Activated naive CD4-positive, alpha-beta T cell treated with anti-CD3 and anti-CD28 coated beads for 36 hours (primary cell): ENCODE measurements at regions of chr4 and their contacts with region 1.

Region 1: GRCh38 chr4:38179690-38180377 is 219.6 kb downstream of the PTTG2 start:
- DNase-seq: peak; percentile 86
- H3K4me3 Mint-ChIP-seq: no peak overlapping the region
- H3K27ac Mint-ChIP-seq: no peak overlapping the region
- H3K4me1 Mint-ChIP-seq: peaks cover 33% of the 10 kb centered on the region
- H3K27me3 Mint-ChIP-seq: no peaks in the 10 kb centered on the region

Region 2: GRCh38 chr4:37623125-37623524 is 556.7 kb before region 1 on chr4:
- CTCF ChIA-PET with region 1: no interaction called
- intact Hi-C with region 1: no loop called
- DNase-seq: no peak
- H3K4me3 Mint-ChIP-seq: no peak overlapping the region
- H3K27ac Mint-ChIP-seq: no peak overlapping the region
- H3K4me1 Mint-ChIP-seq: no peaks in the 10 kb centered on the region
- H3K27me3 Mint-ChIP-seq: no peaks in the 10 kb centered on the region

Region 3: DNA sequence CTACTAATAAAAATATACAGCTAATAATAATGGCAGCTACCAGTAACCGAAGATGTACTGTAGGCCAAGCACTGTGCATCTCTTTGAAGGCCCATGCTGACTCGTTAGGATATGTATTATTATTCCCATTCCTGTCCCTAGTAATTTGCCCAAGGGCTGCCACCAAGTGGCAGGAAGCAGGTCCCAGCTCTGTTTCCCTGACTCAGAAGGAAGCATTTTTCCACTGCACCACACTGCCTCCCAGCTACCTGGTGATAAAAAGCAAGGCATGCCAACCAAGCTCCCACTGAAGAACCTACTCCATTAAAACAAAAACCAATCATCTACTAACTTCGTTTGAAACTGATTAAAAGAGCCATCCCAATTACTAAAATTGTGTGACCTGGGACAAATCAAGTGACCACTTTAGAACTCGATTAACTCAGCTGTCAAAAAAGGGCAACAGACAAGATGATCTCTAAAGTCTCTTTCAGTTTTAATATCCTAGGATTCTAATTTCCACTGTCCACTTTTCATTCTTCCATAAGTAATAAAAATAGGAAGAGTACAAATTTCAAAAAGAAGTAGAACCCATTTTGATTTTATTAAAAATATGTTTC is 377.7 kb before region 1 on chr4:
- CTCF ChIA-PET with region 1: interaction called, 3 read pairs
- intact Hi-C with region 1: loop called (anchors 2 kb)
- DNase-seq: peak; percentile 46
- H3K4me3 Mint-ChIP-seq: no peak overlapping the region
- H3K27ac Mint-ChIP-seq: no peak overlapping the region
- H3K4me1 Mint-ChIP-seq: no peaks in the 10 kb centered on the region
- H3K27me3 Mint-ChIP-seq: no peaks in the 10 kb centered on the region

Region 4: GRCh38 chr4:38166082-38166481 is 13.8 kb before region 1 on chr4:
- CTCF ChIA-PET with region 1: interaction called, 10 read pairs
- intact Hi-C with region 1: no loop called
- DNase-seq: peak; percentile 33
- H3K4me3 Mint-ChIP-seq: no peak overlapping the region
- H3K27ac Mint-ChIP-seq: no peak overlapping the region
- H3K4me1 Mint-ChIP-seq: peaks cover 54% of the 10 kb centered on the region
- H3K27me3 Mint-ChIP-seq: no peaks in the 10 kb centered on the region

Region 5: DNA sequence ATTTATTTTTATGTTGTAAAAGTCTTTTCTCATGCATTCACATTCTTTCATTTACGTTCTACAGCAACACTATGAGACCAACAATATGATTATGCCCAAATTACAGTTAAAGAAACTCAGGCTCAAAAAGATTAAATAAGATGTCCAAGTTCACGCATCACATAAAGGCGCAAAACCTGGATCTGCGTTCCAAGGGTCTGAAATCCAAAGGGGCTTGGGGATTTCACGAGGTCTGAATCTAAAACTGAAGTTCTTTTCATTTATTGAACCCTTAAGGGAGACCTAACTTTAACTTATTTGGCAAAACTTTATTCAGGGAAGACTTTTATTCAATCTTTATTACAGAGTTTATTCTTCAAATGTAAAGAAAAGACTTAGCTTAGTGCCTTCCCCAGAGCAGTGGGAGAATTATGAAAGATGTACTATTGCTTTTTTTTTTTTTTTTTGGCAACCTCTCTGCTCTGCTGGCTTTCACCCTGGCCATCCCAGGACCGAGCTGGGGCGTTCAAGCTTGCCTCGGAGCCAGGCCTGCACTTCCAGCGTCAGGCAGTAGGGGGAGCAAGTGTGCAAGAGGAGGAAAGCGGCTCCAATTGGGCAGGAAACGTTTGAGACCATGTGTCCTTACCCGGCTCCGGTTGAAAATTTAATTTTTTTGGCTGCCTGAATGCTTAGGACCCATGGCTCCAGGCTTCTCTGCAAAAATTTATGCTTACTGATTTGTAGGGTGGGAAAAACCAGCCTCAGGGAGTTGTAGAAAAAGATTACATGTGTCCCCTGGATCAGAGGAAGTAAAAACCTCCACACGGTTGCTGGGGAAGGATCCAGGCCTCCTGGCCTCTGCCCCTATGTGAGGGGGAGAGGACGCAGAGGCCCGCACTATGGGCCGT is 139.9 kb after region 1 on chr4:
- CTCF ChIA-PET with region 1: interaction called, 24 read pairs
- intact Hi-C with region 1: loop called (anchors 1 kb)
- DNase-seq: peak; percentile 98
- H3K4me3 Mint-ChIP-seq: peak overlapping the region; percentile 76
- H3K27ac Mint-ChIP-seq: peak overlapping the region; percentile 89
- H3K4me1 Mint-ChIP-seq: peaks cover 46% of the 10 kb centered on the region
- H3K27me3 Mint-ChIP-seq: no peaks in the 10 kb centered on the region

Region 6: GRCh38 chr4:38675146-38676121 is 495.6 kb after region 1 on chr4:
- CTCF ChIA-PET with region 1: interaction called, 101 read pairs
- intact Hi-C with region 1: loop called (anchors 1 kb)
- DNase-seq: peak; percentile 95
- H3K4me3 Mint-ChIP-seq: peak overlapping the region; percentile 71
- H3K27ac Mint-ChIP-seq: peak overlapping the region; percentile 82
- H3K4me1 Mint-ChIP-seq: peaks cover 85% of the 10 kb centered on the region
- H3K27me3 Mint-ChIP-seq: no peaks in the 10 kb centered on the region

Region 7: GRCh38 chr4:38730830-38731646 is 551.2 kb after region 1 on chr4:
- CTCF ChIA-PET with region 1: interaction called, 90 read pairs
- intact Hi-C with region 1: loop called (anchors 1 kb)
- DNase-seq: peak; percentile 93
- H3K4me3 Mint-ChIP-seq: no peak overlapping the region
- H3K27ac Mint-ChIP-seq: no peak overlapping the region
- H3K4me1 Mint-ChIP-seq: peaks cover 16% of the 10 kb centered on the region
- H3K27me3 Mint-ChIP-seq: no peaks in the 10 kb centered on the region

Region 8: GRCh38 chr4:38782452-38783108 is 602.7 kb after region 1 on chr4 and contains the start of gene TLR10:
- CTCF ChIA-PET with region 1: interaction called, 16 read pairs
- intact Hi-C with region 1: loop called (anchors 1 kb)
- DNase-seq: peak; percentile 57
- H3K4me3 Mint-ChIP-seq: no peak within 1 kb of the TSS
- H3K27ac Mint-ChIP-seq: no peak within 1 kb of the TSS
- H3K4me1 Mint-ChIP-seq: peaks cover 4% of the 10 kb centered on the region
- H3K27me3 Mint-ChIP-seq: no peaks in the 10 kb centered on the region
- total RNA-seq, gene TLR10: 0.12 to 0.17 TPM